AG04449 (cell line): ENCODE measurements at regions of chr10 and their contacts with region 1.

Region 1: DNA sequence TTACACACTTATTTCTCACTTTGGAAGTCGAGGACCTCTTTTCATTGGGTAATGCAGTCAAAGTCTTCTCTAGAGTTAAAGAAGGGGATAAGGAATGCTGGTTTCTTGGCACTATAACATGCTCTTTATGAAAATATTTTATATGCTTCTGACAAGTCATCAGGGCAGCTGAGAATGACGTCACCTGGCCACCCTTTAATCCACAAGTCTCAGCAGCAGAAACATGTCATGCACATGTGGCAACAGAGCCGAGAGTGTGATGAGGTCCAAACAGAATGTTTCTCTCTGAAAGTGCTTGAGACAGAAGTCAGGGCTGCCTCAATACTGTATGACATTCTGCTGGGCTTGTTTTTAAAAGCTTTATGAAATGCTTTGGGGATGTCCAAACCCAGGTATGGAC is 63.5 kb upstream of the C10orf90 start:
- DNase-seq: no peak
- H3K4me3 ChIP-seq: no peak overlapping the region
- CTCF ChIP-seq: no peak

Region 2: GRCh38 chr10:126090911-126091728 is 642.9 kb before region 1 on chr10:
- CTCF ChIA-PET with region 1: no interaction called
- POLR2A ChIA-PET with region 1: no interaction called
- DNase-seq: peak; percentile 78
- H3K4me3 ChIP-seq: no peak overlapping the region
- CTCF ChIP-seq: no peak

Region 3: DNA sequence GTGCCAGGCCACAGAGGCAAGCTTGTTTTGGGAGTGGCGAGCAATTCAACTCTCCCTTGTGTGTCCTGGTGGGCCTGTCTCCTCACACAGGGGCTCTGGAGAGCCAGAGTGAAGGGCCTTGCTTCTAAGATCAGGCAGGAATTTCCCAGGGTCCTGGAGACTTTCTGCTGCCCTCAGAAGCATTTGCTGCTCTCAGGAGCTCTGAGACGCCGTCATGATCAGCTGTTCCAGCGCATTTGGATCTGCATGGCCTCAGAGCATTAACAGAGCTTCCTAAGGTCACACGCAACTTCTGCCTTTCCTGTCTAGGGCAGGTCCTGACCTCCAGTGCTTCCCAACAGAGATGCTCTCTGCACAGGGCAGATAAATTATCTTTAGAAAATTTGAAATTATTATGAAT is 11.3 kb before region 1 on chr10:
- CTCF ChIA-PET with region 1: no interaction called
- POLR2A ChIA-PET with region 1: no interaction called
- DNase-seq: no peak
- H3K4me3 ChIP-seq: no peak overlapping the region
- CTCF ChIP-seq: no peak

Region 4: GRCh38 chr10:126749015-126749655 is 15.1 kb after region 1 on chr10:
- CTCF ChIA-PET with region 1: interaction called, 14 read pairs
- POLR2A ChIA-PET with region 1: interaction called, 3 read pairs
- DNase-seq: peak; percentile 41
- H3K4me3 ChIP-seq: no peak overlapping the region
- CTCF ChIP-seq: peak; percentile 90